T-cell (primary cell): ENCODE measurements at regions of chr7 and their contacts with region 1.

Region 1: GRCh38 chr7:142796608-142797385 is 26.0 kb downstream of the PRSS2 start:
- DNase-seq: peak in 4 of 35 experiments; percentile 29 to 66 (median 42)
- ATAC-seq: peak in 2 of 4 experiments; percentile 8 to 9
- H3K4me3 ChIP-seq: peak overlapping the region; percentile 92 to 97
- H3K4me3 Mint-ChIP-seq: peak overlapping the region; percentile 93 to 100 (median 99)
- H3K27ac ChIP-seq: peak overlapping the region; percentile 97
- H3K27ac Mint-ChIP-seq: peak overlapping the region; percentile 100
- H3K4me1 ChIP-seq: peaks cover 35 to 59% of the 10 kb centered on the region in 2 experiments
- H3K4me1 Mint-ChIP-seq: peaks cover 67 to 73% (median 70%) of the 10 kb centered on the region in 3 donors
- H3K27me3 ChIP-seq: no peaks in the 10 kb centered on the region
- H3K27me3 Mint-ChIP-seq: peaks cover 0 to 3% of the 10 kb centered on the region in 2 donors

Region 2: GRCh38 chr7:142697270-142697669 is 99.5 kb before region 1 on chr7:
- CTCF ChIA-PET with region 1: no interaction called
- POLR2A ChIA-PET with region 1: no interaction called
- DNase-seq: no peak
- ATAC-seq: no peak
- H3K4me3 ChIP-seq: no peak overlapping the region
- H3K4me3 Mint-ChIP-seq: no peak overlapping the region
- H3K27ac ChIP-seq: no peak overlapping the region
- H3K27ac Mint-ChIP-seq: no peak overlapping the region
- H3K4me1 ChIP-seq: peaks cover 4 to 10% of the 10 kb centered on the region in 2 experiments
- H3K4me1 Mint-ChIP-seq: peaks cover 31 to 47% (median 33%) of the 10 kb centered on the region in 3 donors
- H3K27me3 ChIP-seq: no peaks in the 10 kb centered on the region
- H3K27me3 Mint-ChIP-seq: no peaks in the 10 kb centered on the region

Region 3: DNA sequence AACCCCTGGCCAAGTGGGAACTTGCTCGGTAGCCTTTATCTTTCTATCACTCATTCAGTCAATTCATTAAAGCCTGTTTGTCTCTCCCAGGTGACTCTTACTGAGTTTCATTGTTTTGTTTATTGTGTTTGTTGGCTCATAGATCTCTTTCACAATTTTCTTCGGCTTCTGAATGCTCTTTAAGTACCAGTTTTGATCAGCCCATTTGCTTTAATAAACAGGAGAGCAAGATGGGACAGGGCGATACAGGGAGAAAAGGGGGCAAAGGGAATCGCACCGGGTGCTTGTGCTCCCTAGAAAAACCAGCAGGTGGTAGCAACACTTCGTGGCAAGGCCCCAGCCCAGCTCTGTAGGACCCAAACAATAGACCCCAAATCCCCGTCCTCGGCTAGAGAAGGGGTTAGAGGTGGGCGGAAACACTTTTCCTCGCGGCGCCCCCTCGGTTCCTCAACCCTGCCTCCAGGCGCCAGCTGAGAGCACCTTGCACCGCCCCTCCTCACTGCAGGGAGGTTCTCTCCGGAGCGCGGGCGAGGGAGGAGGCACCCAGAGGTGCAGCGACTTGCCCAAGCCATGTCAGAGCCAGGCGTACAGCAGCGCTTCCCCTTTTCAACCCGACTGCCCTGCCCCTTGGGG is 57.1 kb after region 1 on chr7:
- CTCF ChIA-PET with region 1: no interaction called
- POLR2A ChIA-PET with region 1: interaction called in 1 of 2 experiments, 14 read pairs
- DNase-seq: peak; percentile 28 to 75 (median 56)
- ATAC-seq: peak; percentile 80 to 83 (median 82)
- H3K4me3 ChIP-seq: peak overlapping the region; percentile 71 to 91
- H3K4me3 Mint-ChIP-seq: peak overlapping the region; percentile 91 to 98 (median 94)
- H3K27ac ChIP-seq: peak overlapping the region; percentile 22
- H3K27ac Mint-ChIP-seq: peak overlapping the region; percentile 70 to 85
- H3K4me1 ChIP-seq: peaks cover 19 to 20% of the 10 kb centered on the region in 2 experiments
- H3K4me1 Mint-ChIP-seq: peaks cover 24 to 30% (median 28%) of the 10 kb centered on the region in 3 donors
- H3K27me3 ChIP-seq: no peaks in the 10 kb centered on the region
- H3K27me3 Mint-ChIP-seq: peaks cover 0 to 6% of the 10 kb centered on the region in 2 donors